CD8-positive, alpha-beta memory T cell (primary cell): ENCODE measurements at regions of chr12 and their contacts with region 1.

Region 1: DNA sequence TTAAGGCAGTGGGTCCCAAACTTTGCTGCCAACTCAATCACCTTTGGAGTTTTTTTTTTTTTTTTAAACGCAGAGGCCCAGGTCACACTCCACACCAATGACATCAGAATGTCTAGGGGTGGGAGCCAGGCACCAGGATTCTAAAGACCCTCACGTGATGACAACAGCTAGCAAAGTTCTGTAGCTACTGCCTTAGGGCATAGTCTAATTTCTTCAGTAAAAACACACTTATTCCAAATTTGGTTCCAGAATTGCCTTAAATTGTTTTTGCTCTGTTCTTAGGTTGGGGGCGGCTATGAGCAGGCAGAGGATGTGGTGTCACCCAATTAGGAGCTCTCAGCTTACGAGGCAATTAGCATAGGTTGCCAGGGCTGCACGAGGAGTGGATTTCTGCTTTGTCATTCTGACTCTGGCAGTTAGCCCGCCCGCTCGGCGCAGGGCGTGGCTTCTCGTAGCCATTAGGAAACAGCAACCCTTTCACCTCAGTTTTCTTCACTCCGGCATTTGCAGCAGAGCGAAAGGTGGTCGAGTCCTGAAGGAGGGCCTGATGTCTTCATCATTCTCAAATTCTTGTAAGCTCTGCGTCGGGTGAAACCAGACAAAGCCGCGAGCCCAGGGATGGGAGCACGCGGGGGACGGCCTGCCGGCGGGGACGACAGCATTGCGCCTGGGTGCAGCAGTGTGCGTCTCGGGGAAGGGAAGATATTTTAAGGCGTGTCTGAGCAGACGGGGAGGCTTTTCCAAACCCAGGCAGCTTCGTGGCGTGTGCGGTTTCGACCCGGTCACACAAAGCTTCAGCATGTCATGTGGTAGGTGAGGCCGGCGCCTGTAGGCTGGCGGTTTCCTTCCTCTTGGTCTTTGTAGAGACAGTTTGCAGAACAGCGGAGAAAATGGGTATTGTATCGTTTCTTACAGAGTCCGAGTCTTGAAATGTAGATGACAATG is 16.7 kb upstream of the EID3 start:
- DNase-seq: peak; percentile 79 to 94 (median 87)
- H3K4me3 ChIP-seq: peak overlapping the region; percentile 82
- H3K4me3 Mint-ChIP-seq: peak overlapping the region; percentile 94 to 99 (median 98)
- H3K27ac ChIP-seq: peak overlapping the region; percentile 89
- H3K27ac Mint-ChIP-seq: peak overlapping the region; percentile 89 to 99 (median 97)
- H3K4me1 ChIP-seq: peaks cover 30% of the 10 kb centered on the region
- H3K4me1 Mint-ChIP-seq: peaks cover 36 to 45% (median 45%) of the 10 kb centered on the region in 3 donors
- H3K27me3 ChIP-seq: no peaks in the 10 kb centered on the region
- H3K27me3 Mint-ChIP-seq: peaks cover 2% of the 10 kb centered on the region in 2 donors

Region 2: DNA sequence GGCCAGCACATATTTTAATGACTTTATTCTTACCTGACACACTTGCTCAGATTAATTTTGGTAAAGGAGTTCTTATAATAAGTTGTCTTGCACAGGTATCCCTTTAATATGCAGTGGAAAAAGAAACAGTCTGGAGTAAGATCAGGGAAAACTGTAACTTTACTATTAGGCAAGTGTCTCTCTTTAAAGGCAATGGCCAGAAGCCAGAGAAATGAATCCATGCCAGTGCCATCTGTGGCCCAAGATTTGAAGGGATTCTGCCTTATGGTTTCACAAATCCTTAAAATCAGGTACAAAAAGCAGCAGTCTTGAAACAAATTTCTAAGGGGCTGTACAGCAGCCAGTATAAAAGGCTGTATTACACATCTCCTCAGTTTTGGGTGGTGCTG is 171.2 kb before region 1 on chr12:
- CTCF ChIA-PET with region 1: no interaction called
- POLR2A ChIA-PET with region 1: no interaction called
- DNase-seq: no peak
- H3K4me3 ChIP-seq: no peak overlapping the region
- H3K4me3 Mint-ChIP-seq: no peak overlapping the region
- H3K27ac ChIP-seq: no peak overlapping the region
- H3K27ac Mint-ChIP-seq: peak overlapping the region in 3 of 8 donors; percentile 5 to 82 (median 33)
- H3K4me1 ChIP-seq: no peaks in the 10 kb centered on the region
- H3K4me1 Mint-ChIP-seq: peaks cover 7 to 12% (median 11%) of the 10 kb centered on the region in 3 donors
- H3K27me3 ChIP-seq: no peaks in the 10 kb centered on the region
- H3K27me3 Mint-ChIP-seq: no peaks in the 10 kb centered on the region

Region 3: GRCh38 chr12:104215638-104216297 is 71.0 kb before region 1 on chr12 and contains the start of gene TXNRD1:
- CTCF ChIA-PET with region 1: interaction called, 18 read pairs
- POLR2A ChIA-PET with region 1: interaction called, 4 read pairs
- DNase-seq: peak; percentile 70 to 87 (median 76)
- H3K4me3 ChIP-seq: peak within 1 kb of the TSS; percentile 65
- H3K4me3 Mint-ChIP-seq: peak within 1 kb of the TSS; percentile 81 to 92 (median 85)
- H3K27ac ChIP-seq: no peak within 1 kb of the TSS
- H3K27ac Mint-ChIP-seq: peak within 1 kb of the TSS; percentile 6 to 92 (median 83)
- H3K4me1 ChIP-seq: peaks cover 13% of the 10 kb centered on the region
- H3K4me1 Mint-ChIP-seq: peaks cover 20 to 29% (median 23%) of the 10 kb centered on the region in 3 donors
- H3K27me3 ChIP-seq: no peaks in the 10 kb centered on the region
- H3K27me3 Mint-ChIP-seq: peaks cover 0 to 5% of the 10 kb centered on the region in 2 donors
- total RNA-seq, gene TXNRD1: 103 to 107 TPM

Region 4: DNA sequence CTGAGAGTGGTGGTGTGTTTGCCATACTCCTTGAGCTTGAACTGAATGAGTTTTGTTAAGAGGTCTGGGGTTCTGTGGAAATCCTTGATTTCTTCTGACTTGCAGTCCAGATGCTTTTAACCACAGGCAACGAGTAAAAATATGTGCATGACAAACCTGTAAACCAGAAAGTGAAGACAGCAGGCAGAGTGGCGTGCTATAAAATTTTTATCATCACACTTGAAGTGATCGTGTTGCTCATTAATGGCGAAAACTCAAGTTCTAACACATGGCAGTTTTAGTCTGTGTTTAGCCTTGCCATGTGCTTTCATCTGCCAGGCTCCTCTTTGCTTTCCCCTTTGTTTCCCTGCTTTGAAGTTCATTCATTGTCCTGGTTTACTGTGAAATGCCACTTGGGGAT is 43.3 kb before region 1 on chr12:
- CTCF ChIA-PET with region 1: no interaction called
- POLR2A ChIA-PET with region 1: no interaction called
- DNase-seq: no peak
- H3K4me3 ChIP-seq: no peak overlapping the region
- H3K4me3 Mint-ChIP-seq: no peak overlapping the region
- H3K27ac ChIP-seq: no peak overlapping the region
- H3K27ac Mint-ChIP-seq: no peak overlapping the region
- H3K4me1 ChIP-seq: no peaks in the 10 kb centered on the region
- H3K4me1 Mint-ChIP-seq: no peaks in the 10 kb centered on the region
- H3K27me3 ChIP-seq: no peaks in the 10 kb centered on the region
- H3K27me3 Mint-ChIP-seq: peaks cover 6 to 23% of the 10 kb centered on the region in 2 donors

Region 5: GRCh38 chr12:104303538-104304151 is 16.8 kb after region 1 on chr12 and contains the start of gene EID3:
- CTCF ChIA-PET with region 1: interaction called, 24 read pairs
- POLR2A ChIA-PET with region 1: interaction called, 47 read pairs
- DNase-seq: peak; percentile 89 to 92 (median 90)
- H3K4me3 ChIP-seq: peak within 1 kb of the TSS; percentile 71
- H3K4me3 Mint-ChIP-seq: peak within 1 kb of the TSS; percentile 86 to 97 (median 95)
- H3K27ac ChIP-seq: peak within 1 kb of the TSS; percentile 73
- H3K27ac Mint-ChIP-seq: peak within 1 kb of the TSS; percentile 95 to 99 (median 97)
- H3K4me1 ChIP-seq: peaks cover 19% of the 10 kb centered on the region
- H3K4me1 Mint-ChIP-seq: peaks cover 43 to 80% (median 70%) of the 10 kb centered on the region in 3 donors
- H3K27me3 ChIP-seq: no peaks in the 10 kb centered on the region
- H3K27me3 Mint-ChIP-seq: no peaks in the 10 kb centered on the region
- total RNA-seq, gene EID3: 7.7 to 8.3 TPM

Region 6: GRCh38 chr12:104710940-104711689 is 424.3 kb after region 1 on chr12:
- CTCF ChIA-PET with region 1: no interaction called
- POLR2A ChIA-PET with region 1: no interaction called
- DNase-seq: no peak
- H3K4me3 ChIP-seq: no peak overlapping the region
- H3K4me3 Mint-ChIP-seq: no peak overlapping the region
- H3K27ac ChIP-seq: no peak overlapping the region
- H3K27ac Mint-ChIP-seq: peak overlapping the region in 6 of 8 donors; percentile 51 to 77 (median 53)
- H3K4me1 ChIP-seq: no peaks in the 10 kb centered on the region
- H3K4me1 Mint-ChIP-seq: peaks cover 57 to 84% (median 64%) of the 10 kb centered on the region in 3 donors
- H3K27me3 ChIP-seq: no peaks in the 10 kb centered on the region
- H3K27me3 Mint-ChIP-seq: no peaks in the 10 kb centered on the region